ENCODE measurements at regions of chr17 and their contacts with region 1.

Region 1: DNA sequence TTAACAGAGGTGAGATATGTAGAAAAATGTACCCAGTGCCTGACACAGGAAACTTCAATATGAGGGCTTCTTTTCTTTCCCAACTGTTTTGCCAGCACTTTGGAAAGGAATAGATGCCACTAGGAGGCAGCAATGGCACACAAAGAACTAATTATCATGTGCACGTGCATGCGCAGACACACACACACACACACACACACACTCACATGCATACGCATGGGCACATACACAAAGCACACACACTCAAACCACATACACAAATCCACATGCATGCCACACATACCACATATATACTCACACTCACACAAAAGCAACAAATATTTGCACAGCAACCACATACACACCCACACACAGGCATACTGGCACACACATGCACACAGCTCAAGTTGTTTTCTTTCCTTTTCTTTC is 8.8 kb upstream of the CEP112 start:
- DNase-seq: peak; percentile 66
- H3K4me3 ChIP-seq: no peak overlapping the region
- H3K27ac ChIP-seq: no peak overlapping the region
- H3K4me1 ChIP-seq: no peaks in the 10 kb centered on the region
- CTCF ChIP-seq: peak; percentile 82

Region 2: GRCh38 chr17:66221755-66222530 is 21.3 kb after region 1 on chr17:
- CTCF ChIA-PET with region 1: no interaction called
- POLR2A ChIA-PET with region 1: no interaction called
- intact Hi-C with region 1: no loop called
- DNase-seq: no peak
- H3K4me3 ChIP-seq: no peak overlapping the region
- H3K27ac ChIP-seq: no peak overlapping the region
- H3K4me1 ChIP-seq: no peaks in the 10 kb centered on the region
- CTCF ChIP-seq: no peak

Region 3: GRCh38 chr17:66290101-66290722 is 89.5 kb after region 1 on chr17:
- CTCF ChIA-PET with region 1: no interaction called
- POLR2A ChIA-PET with region 1: no interaction called
- intact Hi-C with region 1: no loop called
- DNase-seq: peak; percentile 26
- H3K4me3 ChIP-seq: no peak overlapping the region
- H3K27ac ChIP-seq: no peak overlapping the region
- H3K4me1 ChIP-seq: no peaks in the 10 kb centered on the region
- CTCF ChIP-seq: peak; percentile 66

Region 4: GRCh38 chr17:66567234-66568170 is 366.8 kb after region 1 on chr17:
- CTCF ChIA-PET with region 1: no interaction called
- POLR2A ChIA-PET with region 1: no interaction called
- intact Hi-C with region 1: loop called (anchors 5 kb)
- DNase-seq: peak; percentile 73
- H3K4me3 ChIP-seq: no peak overlapping the region
- H3K27ac ChIP-seq: no peak overlapping the region
- H3K4me1 ChIP-seq: no peaks in the 10 kb centered on the region
- CTCF ChIP-seq: peak; percentile 93